ENCODE measurements at regions of chr1 and their contacts with region 1.

Region 1: DNA sequence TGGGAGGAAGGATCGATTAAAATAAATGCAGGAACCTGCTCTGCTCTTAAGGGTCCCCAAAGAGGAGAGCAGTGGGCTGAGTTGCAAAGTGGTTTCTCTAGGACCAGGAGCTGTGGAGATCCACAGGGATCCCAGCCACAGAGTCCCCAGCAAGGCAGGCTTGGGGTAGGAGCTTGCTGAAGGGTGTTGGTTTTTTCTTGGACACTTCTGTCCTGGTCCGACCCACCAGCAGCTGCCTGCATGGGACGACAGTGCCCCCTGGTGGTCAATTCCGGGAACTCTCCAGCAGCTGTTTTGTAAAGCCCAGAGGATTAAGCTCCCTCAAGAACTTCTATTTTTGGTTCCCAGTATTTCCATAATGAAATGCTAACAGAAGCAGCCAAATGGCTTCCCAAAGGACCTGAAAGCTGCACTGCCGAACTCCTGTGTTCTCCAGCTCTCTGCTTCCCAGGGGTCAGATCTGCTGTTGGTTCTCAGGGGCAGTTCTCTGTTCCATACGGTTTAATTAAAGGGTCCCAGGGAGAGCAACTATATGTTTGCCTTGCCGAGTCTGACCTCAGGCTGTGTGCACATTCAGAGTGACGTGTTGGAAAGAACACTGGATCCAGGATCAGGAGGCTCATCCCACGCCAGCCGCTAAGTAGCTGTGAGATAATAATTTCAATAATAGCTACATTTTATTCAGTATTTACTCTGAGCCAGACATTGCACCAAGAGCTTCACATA is 23.2 kb downstream of the NENF start:
- DNase-seq: peak; percentile 98
- ATAC-seq: peak; percentile 94
- H3K4me3 ChIP-seq: 0 out of 2 replicates have a peak overlapping the region, but pooled peaks have one; percentile 20
- H3K27ac ChIP-seq: no peak overlapping the region
- H3K4me1 ChIP-seq: peaks cover 3% of the 10 kb centered on the region; the same call in 1 of the 2 replicates
- H3K27me3 ChIP-seq: no peaks in the 10 kb centered on the region
- CTCF ChIP-seq: peak; percentile 100

Region 2: GRCh38 chr1:211675230-211676105 is 780.5 kb before region 1 on chr1 and contains the start of gene NEK2:
- CTCF ChIA-PET with region 1: interaction called, 13 read pairs
- POLR2A ChIA-PET with region 1: no interaction called
- intact Hi-C with region 1: loop called (anchors 1 kb)
- DNase-seq: peak; percentile 99
- ATAC-seq: peak; percentile 98
- H3K4me3 ChIP-seq: peak within 1 kb of the TSS; percentile 81
- H3K27ac ChIP-seq: peak within 1 kb of the TSS; percentile 27
- H3K4me1 ChIP-seq: peaks cover 24% of the 10 kb centered on the region
- H3K27me3 ChIP-seq: no peaks in the 10 kb centered on the region
- CTCF ChIP-seq: no peak
- total RNA-seq, gene NEK2: 42.7 and 47.5 TPM in 2 replicates

Region 3: DNA sequence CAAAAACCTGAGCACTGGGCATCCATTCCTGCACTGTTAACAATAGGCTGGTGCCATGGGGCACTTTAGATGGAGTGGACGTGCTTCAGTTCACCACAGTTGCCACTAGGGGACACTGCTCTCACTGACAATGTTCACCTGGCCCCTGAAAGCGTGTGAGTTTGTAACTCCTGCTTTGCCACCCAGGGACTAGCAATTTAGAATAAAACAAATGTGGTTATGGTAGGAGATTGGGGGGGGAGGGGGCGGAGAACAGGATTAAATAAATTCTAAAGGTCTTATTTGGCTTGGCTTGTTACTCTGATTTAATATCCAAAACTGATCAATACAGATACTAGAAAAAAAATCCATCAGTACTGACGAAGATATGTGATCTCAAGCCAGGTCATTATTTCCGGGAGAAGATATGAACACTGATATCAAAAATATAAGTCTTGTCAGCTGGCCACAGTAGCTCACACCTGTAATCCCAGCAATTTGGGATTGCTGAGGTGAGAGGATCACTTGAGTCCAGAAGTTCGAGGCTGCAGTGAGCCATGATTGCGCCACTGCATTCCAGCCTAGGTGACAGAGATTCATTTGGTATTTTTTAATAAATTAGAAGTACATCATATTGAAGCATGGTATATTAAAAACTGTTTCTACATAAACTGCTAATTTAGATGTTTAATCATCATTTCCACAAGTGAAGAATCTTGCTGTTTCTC is 443.8 kb before region 1 on chr1:
- CTCF ChIA-PET with region 1: interaction called, 3 read pairs
- POLR2A ChIA-PET with region 1: no interaction called
- intact Hi-C with region 1: loop called (anchors 5 kb)
- DNase-seq: peak; percentile 89
- ATAC-seq: peak; percentile 97
- H3K4me3 ChIP-seq: no peak overlapping the region
- H3K27ac ChIP-seq: no peak overlapping the region
- H3K4me1 ChIP-seq: peaks cover 3% of the 10 kb centered on the region; the same call in 1 of the 2 replicates
- H3K27me3 ChIP-seq: no peaks in the 10 kb centered on the region
- CTCF ChIP-seq: peak; percentile 99

Region 4: GRCh38 chr1:212062832-212063438 is 393.0 kb before region 1 on chr1:
- CTCF ChIA-PET with region 1: interaction called, 6 read pairs
- POLR2A ChIA-PET with region 1: no interaction called
- intact Hi-C with region 1: loop called (anchors 1 kb)
- DNase-seq: peak; percentile 73
- ATAC-seq: peak; percentile 79
- H3K4me3 ChIP-seq: no peak overlapping the region
- H3K27ac ChIP-seq: no peak overlapping the region
- H3K4me1 ChIP-seq: peaks cover 18% of the 10 kb centered on the region
- H3K27me3 ChIP-seq: no peaks in the 10 kb centered on the region
- CTCF ChIP-seq: peak; percentile 96

Region 5: GRCh38 chr1:212291505-212292134 is 164.3 kb before region 1 on chr1:
- CTCF ChIA-PET with region 1: interaction called, 8 read pairs
- POLR2A ChIA-PET with region 1: no interaction called
- intact Hi-C with region 1: loop called (anchors 1 kb)
- DNase-seq: peak; percentile 84
- ATAC-seq: peak; percentile 52
- H3K4me3 ChIP-seq: no peak overlapping the region
- H3K27ac ChIP-seq: no peak overlapping the region
- H3K4me1 ChIP-seq: peaks cover 45% of the 10 kb centered on the region
- H3K27me3 ChIP-seq: no peaks in the 10 kb centered on the region
- CTCF ChIP-seq: peak; percentile 99

Region 6: DNA sequence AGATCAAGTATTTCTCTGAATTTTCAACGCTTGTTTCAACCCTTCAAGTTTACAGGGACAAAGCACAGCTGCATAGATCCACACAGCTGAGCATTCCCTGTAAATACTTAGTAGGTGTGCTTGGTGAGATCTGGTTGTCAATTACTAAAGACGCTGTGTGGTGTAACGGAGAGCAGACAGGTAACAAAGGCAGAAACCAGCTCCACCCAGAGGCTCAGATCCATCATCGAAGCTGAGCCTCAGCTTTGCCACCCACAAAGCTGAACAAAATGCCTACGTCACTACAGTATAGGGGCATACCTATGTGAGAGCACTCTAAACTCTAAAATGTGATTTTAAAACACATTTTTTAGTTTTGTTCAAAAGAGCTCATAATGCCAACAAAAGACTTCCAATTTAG is 80.0 kb before region 1 on chr1:
- CTCF ChIA-PET with region 1: interaction called, 14 read pairs
- POLR2A ChIA-PET with region 1: no interaction called
- intact Hi-C with region 1: no loop called
- DNase-seq: no peak
- ATAC-seq: no peak
- H3K4me3 ChIP-seq: no peak overlapping the region
- H3K27ac ChIP-seq: no peak overlapping the region
- H3K4me1 ChIP-seq: no peaks in the 10 kb centered on the region
- H3K27me3 ChIP-seq: no peaks in the 10 kb centered on the region
- CTCF ChIP-seq: no peak

Region 7: DNA sequence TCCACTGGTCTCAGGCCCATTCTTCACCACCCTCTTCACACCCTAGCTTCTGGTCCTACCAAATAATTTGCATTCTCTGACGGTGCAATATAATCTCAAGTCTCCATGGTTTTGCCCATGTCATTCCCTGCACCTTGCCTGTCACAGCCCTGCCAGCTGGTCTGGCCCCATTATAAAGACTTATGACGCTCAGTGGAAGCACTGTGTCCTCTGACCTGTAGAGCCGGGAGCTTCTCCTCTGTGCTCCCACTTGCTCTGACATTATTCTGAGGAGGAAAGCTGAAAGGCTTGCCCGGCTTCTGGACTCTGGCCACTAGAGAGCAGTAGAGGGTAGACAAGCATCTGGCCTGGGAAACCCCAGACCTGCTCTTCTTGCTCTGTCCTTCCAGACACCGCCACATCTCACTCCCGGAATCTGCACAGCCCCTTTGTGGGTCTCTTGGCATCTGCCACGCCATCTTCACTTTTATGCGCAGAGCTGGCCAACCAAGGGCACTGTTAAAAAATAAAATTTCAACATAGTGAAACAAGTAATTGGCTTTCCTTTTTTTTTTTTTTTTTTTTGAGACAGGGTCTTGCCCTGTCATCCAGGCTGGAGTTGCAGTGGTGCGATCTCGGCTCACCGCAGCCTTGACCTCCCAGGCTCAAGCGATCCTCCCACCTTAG is 21.2 kb after region 1 on chr1:
- CTCF ChIA-PET with region 1: interaction called, 15 read pairs
- POLR2A ChIA-PET with region 1: interaction called, 3 read pairs
- intact Hi-C with region 1: no loop called
- DNase-seq: peak; percentile 99
- ATAC-seq: peak; percentile 96
- H3K4me3 ChIP-seq: no peak overlapping the region
- H3K27ac ChIP-seq: 0 out of 2 replicates have a peak overlapping the region, but pooled peaks have one; percentile 3
- H3K4me1 ChIP-seq: peaks cover 19% of the 10 kb centered on the region
- H3K27me3 ChIP-seq: no peaks in the 10 kb centered on the region
- CTCF ChIP-seq: peak; percentile 99

Region 8: DNA sequence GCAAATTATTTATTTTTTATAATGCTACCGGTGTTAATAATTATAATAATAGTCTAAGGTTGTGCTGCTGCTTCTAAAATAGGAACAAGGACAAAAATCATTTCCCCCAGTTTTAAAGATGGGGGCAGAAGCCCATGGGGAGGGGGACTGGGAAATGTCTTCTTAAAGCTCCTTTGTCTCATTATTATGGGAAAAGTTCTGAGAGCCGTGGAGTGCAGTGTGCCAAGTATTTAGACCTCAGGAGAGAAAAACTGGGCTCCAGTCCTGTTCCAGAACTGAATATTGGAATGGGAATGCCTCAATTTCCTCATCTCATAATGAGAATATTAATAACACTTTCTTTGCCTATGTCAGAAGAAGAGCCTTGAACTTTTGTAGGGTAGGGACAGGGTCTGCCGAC is 111.7 kb after region 1 on chr1:
- CTCF ChIA-PET with region 1: no interaction called
- POLR2A ChIA-PET with region 1: no interaction called
- intact Hi-C with region 1: no loop called
- DNase-seq: no peak
- ATAC-seq: no peak
- H3K4me3 ChIP-seq: peak overlapping the region; percentile 67; the same call in 1 of the 2 replicates
- H3K27ac ChIP-seq: no peak overlapping the region
- H3K4me1 ChIP-seq: peaks cover 21% of the 10 kb centered on the region
- H3K27me3 ChIP-seq: no peaks in the 10 kb centered on the region
- CTCF ChIP-seq: no peak

Region 9: GRCh38 chr1:212630158-212630900 is 174.4 kb after region 1 on chr1:
- CTCF ChIA-PET with region 1: no interaction called
- POLR2A ChIA-PET with region 1: no interaction called
- intact Hi-C with region 1: no loop called
- DNase-seq: peak; percentile 77
- ATAC-seq: peak; percentile 89
- H3K4me3 ChIP-seq: no peak overlapping the region
- H3K27ac ChIP-seq: no peak overlapping the region
- H3K4me1 ChIP-seq: no peaks in the 10 kb centered on the region
- H3K27me3 ChIP-seq: no peaks in the 10 kb centered on the region
- CTCF ChIP-seq: peak; percentile 95

Measured in PC-3 (cell line).